ENCODE measurements at regions of chr11 and their contacts with region 1.

Region 1: DNA sequence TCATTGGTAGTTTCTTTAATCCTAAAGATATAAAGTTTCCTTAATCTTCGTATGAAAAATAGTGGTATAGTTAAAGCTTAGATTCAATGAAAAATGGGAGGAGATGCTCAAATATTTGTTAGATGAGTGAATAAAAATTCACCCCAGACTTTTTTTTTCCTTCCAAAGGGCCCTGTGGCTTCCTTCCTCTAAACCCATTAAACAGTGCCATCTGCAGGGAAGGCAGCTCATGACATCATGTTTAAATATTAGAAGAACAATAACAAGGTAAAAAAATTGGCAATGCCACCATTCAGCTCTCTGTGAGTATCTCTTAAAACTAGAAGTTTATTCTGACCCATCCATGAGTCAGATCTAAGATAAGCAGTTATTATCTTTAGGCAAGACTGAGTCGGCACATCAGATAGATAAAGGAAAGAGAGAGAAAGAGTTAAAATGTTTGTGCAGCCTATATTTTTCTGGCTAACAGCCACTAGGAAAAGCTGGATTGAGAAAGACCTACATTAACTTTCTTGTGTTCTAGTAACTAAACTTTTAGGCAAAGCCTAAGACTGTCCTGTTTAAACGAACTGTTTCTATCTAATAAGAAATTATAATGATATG is 19.1 kb upstream of the OOSP1 start:
- DNase-seq: peak; percentile 46
- H3K4me3 Mint-ChIP-seq: no peak overlapping the region
- H3K27ac Mint-ChIP-seq: no peak overlapping the region
- H3K4me1 Mint-ChIP-seq: no peaks in the 10 kb centered on the region
- H3K27me3 Mint-ChIP-seq: peaks cover 4% of the 10 kb centered on the region

Region 2: DNA sequence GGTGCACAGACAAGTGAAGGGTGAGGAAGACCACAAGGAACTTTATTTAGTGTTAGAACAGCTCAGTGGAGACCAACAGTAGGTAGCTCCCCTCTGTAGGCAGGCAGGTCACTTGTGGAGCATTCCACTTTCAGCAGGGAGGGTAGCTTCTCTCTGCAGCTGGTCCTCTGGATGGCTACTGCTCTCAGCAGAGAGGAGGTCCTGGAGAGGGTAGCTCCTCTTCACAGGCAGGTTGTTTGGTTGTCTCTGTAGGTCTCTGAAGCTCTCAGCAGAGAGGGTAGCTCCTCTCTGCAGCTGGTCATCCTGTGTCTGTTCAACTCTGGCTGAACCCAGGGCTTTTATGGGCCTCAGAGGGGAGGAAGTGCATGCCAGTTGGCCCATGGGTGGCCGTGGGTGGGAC is 12.6 kb after region 1 on chr11:
- CTCF ChIA-PET with region 1: no interaction called
- intact Hi-C with region 1: no loop called
- DNase-seq: no peak
- H3K4me3 Mint-ChIP-seq: no peak overlapping the region
- H3K27ac Mint-ChIP-seq: no peak overlapping the region
- H3K4me1 Mint-ChIP-seq: no peaks in the 10 kb centered on the region
- H3K27me3 Mint-ChIP-seq: peaks cover 3% of the 10 kb centered on the region

Region 3: GRCh38 chr11:59973097-59973496 is 54.0 kb after region 1 on chr11:
- CTCF ChIA-PET with region 1: no interaction called
- intact Hi-C with region 1: loop called (anchors 10 kb)
- DNase-seq: no peak
- H3K4me3 Mint-ChIP-seq: no peak overlapping the region
- H3K27ac Mint-ChIP-seq: no peak overlapping the region
- H3K4me1 Mint-ChIP-seq: no peaks in the 10 kb centered on the region
- H3K27me3 Mint-ChIP-seq: peaks cover 2% of the 10 kb centered on the region

Region 4: DNA sequence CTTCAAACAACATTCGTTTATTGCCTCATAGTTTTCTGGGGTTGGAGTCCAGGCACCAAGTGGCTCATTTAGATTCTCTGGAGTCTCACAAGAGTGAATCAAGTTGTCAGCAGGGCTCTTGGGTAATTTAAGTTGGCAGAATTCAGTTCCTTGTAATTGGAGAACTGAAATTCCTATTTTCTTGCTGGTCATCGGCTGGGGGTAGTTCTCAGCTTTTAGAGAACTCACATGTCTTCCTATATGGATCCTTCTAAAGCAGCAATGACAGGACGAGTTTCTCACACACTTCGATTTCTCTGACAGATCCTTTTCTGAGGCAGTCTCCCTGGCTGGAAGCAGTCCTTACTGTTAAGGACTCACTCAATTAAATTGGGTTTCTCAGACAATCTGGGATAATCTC is 80.6 kb after region 1 on chr11:
- CTCF ChIA-PET with region 1: no interaction called
- intact Hi-C with region 1: no loop called
- DNase-seq: no peak
- H3K4me3 Mint-ChIP-seq: no peak overlapping the region
- H3K27ac Mint-ChIP-seq: no peak overlapping the region
- H3K4me1 Mint-ChIP-seq: no peaks in the 10 kb centered on the region
- H3K27me3 Mint-ChIP-seq: peaks cover 9% of the 10 kb centered on the region